GM12878 (cell line): ENCODE measurements at regions of chr17 and their contacts with region 1.

Region 1: GRCh38 chr17:42221937-42222745 is 27.8 kb upstream of the GHDC start:
- DNase-seq: no peak
- ATAC-seq: peak; percentile 87
- H3K4me3 ChIP-seq: no peak overlapping the region
- H3K27ac ChIP-seq: no peak overlapping the region
- H3K4me1 ChIP-seq: no peaks in the 10 kb centered on the region
- H3K27me3 ChIP-seq: no peaks in the 10 kb centered on the region
- CTCF ChIP-seq: peak; percentile 67 to 76 (median 70)
- EP300 ChIP-seq: no peak
- POLR2A ChIP-seq: no peak
- RAD21 ChIP-seq: peak; percentile 74

Region 2: DNA sequence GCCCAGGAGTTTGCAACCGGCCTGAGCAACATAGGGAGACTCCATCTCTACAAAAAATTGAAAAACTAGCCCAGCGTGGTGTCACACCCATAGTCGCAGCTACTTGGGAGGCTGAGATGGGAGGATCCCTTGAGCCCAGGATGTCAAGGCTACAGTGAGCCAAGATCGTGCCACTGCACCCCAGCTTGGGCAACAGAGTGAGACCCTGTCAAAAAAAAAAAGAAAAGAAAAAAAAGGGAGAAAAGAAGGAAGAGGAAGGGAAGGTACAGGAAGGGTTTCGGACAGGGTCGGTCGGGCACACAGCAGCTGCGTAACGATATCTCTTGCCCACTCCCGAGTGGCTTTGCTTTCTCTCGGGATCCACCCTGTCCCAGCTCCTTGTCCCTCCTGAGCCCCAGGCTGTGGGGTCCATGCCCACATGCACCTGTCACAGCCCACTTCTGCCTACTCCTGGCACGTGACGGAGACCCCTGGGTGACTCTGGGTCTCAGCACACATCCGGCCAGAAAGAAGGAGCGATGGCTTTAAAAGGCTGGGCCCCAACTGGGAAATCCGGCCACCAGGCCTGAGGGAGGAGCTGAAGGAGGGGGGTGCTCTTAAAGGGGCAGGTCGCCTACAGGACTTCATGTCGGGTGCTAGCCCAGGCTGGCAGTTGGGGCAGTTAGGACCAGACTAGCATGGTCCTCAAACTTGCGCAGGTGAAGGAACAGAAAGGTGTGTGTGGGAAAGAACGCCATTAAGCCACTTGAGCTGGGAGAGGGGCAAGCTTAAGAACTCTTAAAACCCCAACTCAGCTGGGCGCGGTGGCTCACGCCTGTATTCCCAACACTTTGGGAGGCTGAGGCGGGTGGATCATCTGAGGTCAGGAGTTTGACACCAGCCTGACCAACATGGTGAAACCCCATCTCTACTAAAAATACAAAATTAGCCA is 27.9 kb before region 1 on chr17 and contains the start of gene GHDC:
- CTCF ChIA-PET with region 1: interaction called, 15 read pairs
- POLR2A ChIA-PET with region 1: no interaction called
- RAD21 ChIA-PET with region 1: interaction called, 4 read pairs
- SMC1A ChIA-PET with region 1: interaction called, 4 read pairs
- in situ Hi-C with region 1: no loop called
- intact Hi-C with region 1: no loop called
- DNase-seq: peak; percentile 53
- ATAC-seq: peak; percentile 99
- H3K4me3 ChIP-seq: peak within 1 kb of the TSS; percentile 92
- H3K27ac ChIP-seq: peak within 1 kb of the TSS; percentile 95
- H3K4me1 ChIP-seq: 0 out of 2 replicates have a peak, but pooled peaks cover 3% of the 10 kb centered on the region
- H3K27me3 ChIP-seq: no peaks in the 10 kb centered on the region
- CTCF ChIP-seq: 0 out of 6 replicates have a peak, but pooled peaks of 1 of the 3 experiments have one; percentile 6
- EP300 ChIP-seq: no peak
- POLR2A ChIP-seq: peak; percentile 74
- RAD21 ChIP-seq: no peak
- polyA plus RNA-seq, gene GHDC: 0.72 to 2.2 TPM

Region 3: GRCh38 chr17:42233941-42234340 is 11.8 kb after region 1 on chr17:
- CTCF ChIA-PET with region 1: interaction called, 19 read pairs
- POLR2A ChIA-PET with region 1: no interaction called
- RAD21 ChIA-PET with region 1: interaction called, 3 read pairs
- SMC1A ChIA-PET with region 1: interaction called, 4 read pairs
- in situ Hi-C with region 1: no loop called
- intact Hi-C with region 1: no loop called
- DNase-seq: no peak
- ATAC-seq: no peak
- H3K4me3 ChIP-seq: no peak overlapping the region
- H3K27ac ChIP-seq: no peak overlapping the region
- H3K4me1 ChIP-seq: no peaks in the 10 kb centered on the region
- H3K27me3 ChIP-seq: no peaks in the 10 kb centered on the region
- CTCF ChIP-seq: no peak
- EP300 ChIP-seq: no peak
- POLR2A ChIP-seq: no peak
- RAD21 ChIP-seq: no peak

Region 4: DNA sequence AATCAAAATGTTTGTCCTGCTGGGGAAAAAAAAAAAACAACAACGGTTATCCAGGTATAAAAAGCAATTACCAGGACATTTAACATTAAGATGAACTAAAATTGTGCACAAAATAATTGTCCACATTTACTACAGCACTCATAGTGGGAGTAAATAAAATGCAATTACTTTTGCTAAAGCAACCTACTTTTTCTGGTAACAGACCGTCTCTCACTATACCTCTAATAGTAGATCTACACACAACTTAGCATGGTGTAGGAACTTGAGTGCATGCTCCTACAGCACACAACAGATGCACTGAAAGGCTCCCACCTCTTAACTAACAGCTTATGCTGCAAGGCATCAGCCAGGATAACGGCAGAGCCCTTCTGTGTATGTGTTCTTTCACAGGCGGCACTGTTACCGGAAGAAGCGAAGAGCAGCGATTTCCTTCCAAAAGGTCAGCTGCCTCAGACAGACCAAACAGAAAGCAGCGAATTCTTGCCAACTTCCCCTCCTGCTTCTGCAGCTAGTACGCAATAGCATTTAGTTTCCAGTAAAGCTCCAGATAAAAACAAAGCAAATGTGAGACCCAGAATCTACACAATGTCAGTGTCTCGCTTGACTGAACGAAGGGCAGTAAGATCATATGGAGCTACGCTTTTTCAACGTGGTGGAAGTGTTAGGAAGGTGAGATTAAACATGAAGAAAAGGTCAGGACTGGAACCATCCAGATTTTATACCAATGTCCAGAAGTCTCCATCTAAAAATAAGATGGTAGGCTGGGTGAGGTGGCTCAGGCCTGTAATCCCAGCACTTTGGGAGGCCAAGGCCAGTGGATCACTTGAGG is 26.4 kb after region 1 on chr17:
- CTCF ChIA-PET with region 1: interaction called, 50 read pairs
- POLR2A ChIA-PET with region 1: interaction called, 9 read pairs
- RAD21 ChIA-PET with region 1: interaction called, 15 read pairs
- SMC1A ChIA-PET with region 1: interaction called, 7 read pairs
- in situ Hi-C with region 1: no loop called
- intact Hi-C with region 1: no loop called
- DNase-seq: peak; percentile 68
- ATAC-seq: peak; percentile 99
- H3K4me3 ChIP-seq: peak overlapping the region; percentile 70
- H3K27ac ChIP-seq: peak overlapping the region; percentile 88
- H3K4me1 ChIP-seq: peaks cover 27% of the 10 kb centered on the region
- H3K27me3 ChIP-seq: no peaks in the 10 kb centered on the region
- CTCF ChIP-seq: no peak
- EP300 ChIP-seq: no peak
- POLR2A ChIP-seq: peak; percentile 81
- RAD21 ChIP-seq: no peak

Region 5: DNA sequence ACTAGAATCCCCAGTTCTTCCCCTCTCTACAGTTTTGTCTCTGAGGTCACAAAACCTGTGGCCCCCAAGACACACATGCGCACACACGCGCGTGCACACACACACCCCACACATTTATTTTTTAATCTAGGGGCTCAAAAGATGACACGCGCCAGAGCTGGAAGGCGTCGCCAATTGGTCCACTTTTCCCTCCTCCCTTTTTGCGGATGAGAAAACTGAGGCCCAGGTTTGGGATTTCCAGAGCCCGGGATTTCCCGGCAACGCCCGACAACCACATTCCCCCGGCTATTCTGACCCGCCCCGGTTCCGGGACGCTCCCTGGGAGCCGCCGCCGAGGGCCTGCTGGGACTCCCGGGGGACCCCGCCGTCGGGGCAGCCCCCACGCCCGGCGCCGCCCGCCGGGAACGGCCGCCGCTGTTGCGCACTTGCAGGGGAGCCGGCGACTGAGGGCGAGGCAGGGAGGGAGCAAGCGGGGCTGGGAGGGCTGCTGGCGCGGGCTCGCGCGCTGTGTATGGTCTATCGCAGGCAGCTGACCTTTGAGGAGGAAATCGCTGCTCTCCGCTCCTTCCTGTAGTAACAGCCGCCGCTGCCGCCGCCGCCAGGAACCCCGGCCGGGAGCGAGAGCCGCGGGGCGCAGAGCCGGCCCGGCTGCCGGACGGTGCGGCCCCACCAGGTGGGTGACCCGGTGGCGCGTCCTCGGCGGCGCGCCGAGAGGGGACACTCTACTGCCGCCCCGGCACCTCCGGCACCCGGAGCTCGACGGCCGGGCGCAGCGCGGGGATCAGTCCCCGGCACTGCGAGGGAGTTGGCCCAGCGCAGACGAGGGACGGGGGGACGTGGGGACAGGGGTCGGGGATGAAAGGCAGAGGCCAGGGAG is 66.0 kb after region 1 on chr17 and contains the start of gene STAT5A:
- CTCF ChIA-PET with region 1: interaction called, 14 read pairs
- POLR2A ChIA-PET with region 1: no interaction called
- RAD21 ChIA-PET with region 1: interaction called, 21 read pairs
- SMC1A ChIA-PET with region 1: interaction called, 8 read pairs
- in situ Hi-C with region 1: no loop called
- intact Hi-C with region 1: no loop called
- DNase-seq: no peak
- ATAC-seq: peak; percentile 85
- H3K4me3 ChIP-seq: peak within 1 kb of the TSS; percentile 91
- H3K27ac ChIP-seq: peak within 1 kb of the TSS; percentile 79
- H3K4me1 ChIP-seq: peaks cover 23% of the 10 kb centered on the region
- H3K27me3 ChIP-seq: no peaks in the 10 kb centered on the region
- CTCF ChIP-seq: no peak
- EP300 ChIP-seq: no peak
- POLR2A ChIP-seq: peak; percentile 80
- RAD21 ChIP-seq: no peak
- polyA plus RNA-seq, gene STAT5A: 14.8 to 24.0 TPM

Region 6: GRCh38 chr17:42312285-42313130 is 90.4 kb after region 1 on chr17:
- CTCF ChIA-PET with region 1: interaction called, 23 read pairs
- POLR2A ChIA-PET with region 1: no interaction called
- RAD21 ChIA-PET with region 1: interaction called, 15 read pairs
- SMC1A ChIA-PET with region 1: interaction called, 9 read pairs
- in situ Hi-C with region 1: no loop called
- intact Hi-C with region 1: no loop called
- DNase-seq: no peak
- ATAC-seq: peak; percentile 91
- H3K4me3 ChIP-seq: no peak overlapping the region
- H3K27ac ChIP-seq: peak overlapping the region; percentile 53
- H3K4me1 ChIP-seq: peaks cover 43% of the 10 kb centered on the region
- H3K27me3 ChIP-seq: no peaks in the 10 kb centered on the region
- CTCF ChIP-seq: peak; percentile 60 to 87 (median 71)
- EP300 ChIP-seq: no peak
- POLR2A ChIP-seq: peak; percentile 82
- RAD21 ChIP-seq: peak; percentile 67